ENCODE measurements at regions of chr21 and their contacts with region 1.

Region 1: GRCh38 chr21:42474043-42474831 is 21.8 kb downstream of the RSPH1 start:
- DNase-seq: peak; percentile 36
- ATAC-seq: peak; percentile 95
- H3K4me3 Mint-ChIP-seq: peak overlapping the region; percentile 11
- H3K27ac Mint-ChIP-seq: peak overlapping the region; percentile 36
- H3K4me1 Mint-ChIP-seq: peaks cover 21% of the 10 kb centered on the region
- H3K27me3 Mint-ChIP-seq: peaks cover 12% of the 10 kb centered on the region
- CTCF ChIP-seq: no peak

Region 2: GRCh38 chr21:42460391-42461204 is 13.6 kb before region 1 on chr21:
- CTCF ChIA-PET with region 1: no interaction called
- POLR2A ChIA-PET with region 1: interaction called, 4 read pairs
- intact Hi-C with region 1: loop called (anchors 1 kb)
- DNase-seq: peak; percentile 62
- ATAC-seq: peak; percentile 60
- H3K4me3 Mint-ChIP-seq: peak overlapping the region; percentile 78
- H3K27ac Mint-ChIP-seq: peak overlapping the region; percentile 98
- H3K4me1 Mint-ChIP-seq: peaks cover 65% of the 10 kb centered on the region
- H3K27me3 Mint-ChIP-seq: no peaks in the 10 kb centered on the region
- CTCF ChIP-seq: no peak